GM18951 (cell line): ENCODE measurements at regions of chr1 and their contacts with region 1.

Region 1: DNA sequence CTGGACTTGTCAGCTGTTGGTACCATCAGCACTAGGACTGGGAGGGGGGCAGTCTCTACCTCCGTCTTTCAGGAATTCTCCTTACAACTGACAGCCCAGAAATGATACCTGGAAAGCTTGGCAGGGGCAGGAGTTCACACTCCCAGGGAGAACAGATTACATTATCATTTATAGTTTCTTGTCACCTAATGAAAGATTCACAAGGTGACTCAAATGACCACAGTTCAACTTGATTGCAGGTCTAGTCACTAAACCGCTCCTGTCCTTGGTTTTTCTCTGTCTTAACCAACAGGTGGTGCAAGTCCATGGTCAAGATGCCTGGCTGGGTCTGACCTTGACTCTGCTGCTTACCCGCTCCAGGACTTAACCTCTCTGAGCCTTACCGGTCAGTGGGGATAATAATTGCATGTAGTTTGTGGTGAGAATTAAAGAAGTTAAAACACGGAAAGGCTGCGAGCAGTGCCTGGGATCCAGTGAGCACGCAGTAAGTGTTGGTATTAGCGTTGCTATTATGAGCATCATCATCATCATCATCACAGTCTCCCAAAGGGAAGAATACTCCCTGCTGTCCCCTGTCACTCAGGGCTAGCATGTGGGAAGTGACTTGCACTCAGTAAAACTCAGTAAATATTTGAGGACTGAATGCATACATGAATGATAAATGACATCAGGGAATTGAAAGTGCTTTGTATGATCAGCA is 125.3 kb upstream of the CD34 start:
- POLR2A ChIP-seq: no peak

Region 2: GRCh38 chr1:208251911-208252835 is 215.9 kb after region 1 on chr1:
- in situ Hi-C with region 1: loop called (anchors 10 kb)
- POLR2A ChIP-seq: no peak